Posterior vena cava (tissue), 2 donors: ENCODE measurements at regions of chr21 and their contacts with region 1.

Region 1: DNA sequence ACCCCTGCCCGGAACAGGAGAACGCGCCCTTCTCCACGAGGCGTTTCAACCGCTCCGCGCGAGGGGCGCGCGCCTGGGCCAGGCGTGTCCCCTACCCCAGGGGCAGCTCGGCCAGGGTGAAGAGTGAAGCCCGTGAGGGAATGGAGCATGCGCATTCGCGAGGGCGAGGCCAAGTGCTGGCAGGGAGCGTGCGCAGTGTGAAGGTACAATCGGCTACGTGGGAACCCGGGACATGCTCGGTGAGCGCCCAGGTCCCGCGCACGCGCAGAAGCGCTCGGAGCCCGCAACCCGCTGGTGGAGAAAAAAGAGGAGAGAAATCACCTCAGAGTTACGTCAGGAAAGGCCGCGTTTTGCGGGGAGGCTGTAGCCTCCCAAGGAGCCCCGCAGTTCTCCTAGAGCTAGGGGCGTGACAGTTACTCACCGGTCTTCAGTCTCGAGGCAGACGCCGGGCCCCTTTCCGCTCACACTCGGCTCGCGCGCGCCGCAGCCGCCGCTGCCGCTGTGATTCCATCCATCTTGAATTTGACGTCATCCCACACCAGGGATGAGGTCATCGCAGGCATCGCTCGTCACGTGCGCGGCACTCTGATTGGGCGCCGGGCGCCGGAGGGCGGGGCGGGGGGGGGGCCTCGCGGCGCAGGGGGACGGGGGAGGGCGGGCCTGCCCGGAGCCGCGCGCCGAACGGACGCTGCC is at the start of gene ZBTB21:
- DNase-seq: peak; percentile 100
- total RNA-seq, gene ZBTB21: 12.6 to 25.6 TPM

Region 2: DNA sequence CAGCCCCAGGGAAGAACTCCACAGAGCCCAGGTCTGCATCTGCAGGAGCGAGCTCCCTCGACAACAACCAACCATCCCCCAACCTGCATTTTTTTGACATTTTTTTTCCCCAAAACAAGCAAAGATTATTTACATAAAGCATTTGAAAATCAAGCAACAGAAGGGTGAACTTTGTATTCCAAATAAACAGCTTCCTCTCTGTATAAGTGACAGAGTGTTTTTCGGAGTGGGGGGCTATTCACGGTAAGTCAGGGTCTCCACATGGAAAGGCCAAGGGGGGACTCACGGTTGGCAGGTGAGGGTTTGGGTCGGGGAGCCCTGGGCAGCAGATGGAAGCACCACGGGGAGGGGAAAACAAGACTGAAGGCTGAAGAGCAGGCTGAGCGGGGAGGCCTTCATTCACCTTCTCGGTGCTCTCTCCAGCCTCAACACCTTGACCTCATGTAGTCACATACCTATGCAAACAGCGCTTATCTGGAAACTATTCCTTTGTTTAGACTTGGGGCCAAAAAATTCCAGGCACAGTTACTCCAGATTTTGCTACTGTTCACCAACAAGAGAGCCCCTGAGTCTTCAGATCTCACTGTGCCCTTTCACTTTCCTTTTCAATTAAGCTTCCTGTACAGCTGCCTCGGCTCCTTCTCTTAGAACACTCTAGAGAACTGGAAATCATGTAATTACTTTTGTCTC is 83.7 kb before region 1 on chr21:
- intact Hi-C with region 1: loop called in 1 of 2 experiments (anchors 10 kb)
- DNase-seq: no peak

Region 3: DNA sequence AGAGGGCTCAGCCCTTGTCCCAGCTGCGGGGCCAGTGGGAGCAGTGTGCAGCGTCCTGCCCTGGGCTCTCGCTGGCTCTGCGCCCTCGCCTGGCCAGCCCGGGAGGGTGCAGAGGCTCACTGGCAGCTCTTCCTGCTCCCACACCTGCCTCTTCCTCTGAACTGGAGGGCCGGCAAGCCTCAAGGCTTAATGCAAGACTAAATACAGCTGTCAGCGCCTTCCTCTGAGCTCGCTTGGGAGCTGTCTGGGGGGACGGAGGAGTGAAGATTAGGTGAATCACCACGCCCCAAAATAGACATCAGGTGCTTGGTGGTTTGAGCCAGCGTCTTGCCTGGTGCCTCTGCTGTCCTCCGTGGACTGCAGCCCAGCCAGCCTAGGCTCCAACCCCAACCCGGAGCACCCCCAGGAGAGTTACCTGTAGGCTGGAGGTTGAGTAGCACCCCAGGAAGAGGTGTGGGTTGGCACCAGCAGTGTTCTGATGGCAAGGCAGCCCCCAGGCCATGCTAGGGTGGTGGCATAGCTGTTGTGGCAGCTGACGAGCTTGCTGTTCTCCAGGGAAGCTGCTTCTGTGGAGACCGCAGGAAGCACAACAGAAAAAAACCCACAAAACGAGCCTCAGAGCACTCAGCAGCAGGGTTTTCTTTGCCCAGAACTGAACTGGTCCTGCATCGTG is 98.0 kb after region 1 on chr21:
- intact Hi-C with region 1: loop called in 1 of 2 experiments (anchors 5 kb)
- DNase-seq: no peak